ENCODE measurements at regions of chr1 and their contacts with region 1.

Region 1: GRCh38 chr1:6602669-6603237 is at the start of gene KLHL21:
- DNase-seq: peak; percentile 90
- ATAC-seq: peak; percentile 60
- H3K4me3 Mint-ChIP-seq: peak within 1 kb of the TSS; percentile 93
- H3K27ac Mint-ChIP-seq: peak within 1 kb of the TSS; percentile 98
- H3K4me1 Mint-ChIP-seq: peaks cover 28% of the 10 kb centered on the region
- H3K27me3 Mint-ChIP-seq: no peaks in the 10 kb centered on the region
- CTCF ChIP-seq: no peak
- total RNA-seq, gene KLHL21: 17.9 to 18.1 TPM

Region 2: DNA sequence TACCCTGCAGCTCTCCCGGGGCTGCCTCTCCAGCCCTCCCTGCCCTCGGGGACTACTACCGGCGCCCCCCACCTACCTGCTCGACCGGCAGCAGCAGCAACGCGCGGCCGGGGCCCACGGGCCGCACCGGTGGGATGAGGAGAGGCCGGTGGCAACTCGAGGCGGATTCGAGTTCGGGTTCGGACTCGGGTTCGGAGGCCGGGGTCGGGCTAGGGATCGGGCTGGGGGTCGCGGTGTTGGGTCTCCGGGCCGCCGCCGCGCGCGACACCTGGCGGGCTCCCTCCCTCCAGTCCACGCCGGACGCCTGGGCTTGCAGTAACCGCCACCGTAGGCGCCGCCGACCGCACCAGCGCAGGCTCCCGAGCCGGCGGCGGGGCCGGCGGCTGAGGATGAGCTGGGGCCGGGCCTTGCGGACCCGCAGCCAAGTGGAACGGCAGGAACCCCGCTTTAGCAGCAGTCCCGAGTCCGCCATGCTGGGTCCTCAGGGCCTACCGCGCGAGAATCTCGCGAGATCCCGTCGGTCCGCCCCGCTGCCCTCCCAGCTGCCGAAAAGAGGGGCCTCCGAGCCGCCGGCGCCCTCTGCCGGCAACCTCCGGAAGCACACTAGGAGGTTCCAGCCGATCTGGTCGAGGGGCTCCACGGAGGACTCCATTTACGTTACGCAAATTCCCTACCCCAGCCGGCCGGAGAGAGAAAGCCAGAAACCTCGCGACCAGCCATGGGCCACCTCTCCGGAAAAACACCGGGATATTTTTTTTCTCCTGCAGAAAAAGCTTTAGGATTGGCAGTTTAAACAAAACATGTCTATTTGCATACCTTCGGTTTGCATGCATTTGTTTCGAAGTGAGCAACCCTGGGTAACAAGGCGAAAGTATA is 48.5 kb before region 1 on chr1 and contains the start of gene NOL9:
- CTCF ChIA-PET with region 1: interaction called, 12 read pairs
- POLR2A ChIA-PET with region 1: interaction called, 9 read pairs
- intact Hi-C with region 1: no loop called
- DNase-seq: peak; percentile 97
- ATAC-seq: peak; percentile 100
- H3K4me3 Mint-ChIP-seq: peak within 1 kb of the TSS; percentile 82
- H3K27ac Mint-ChIP-seq: peak within 1 kb of the TSS; percentile 67
- H3K4me1 Mint-ChIP-seq: peaks cover 18% of the 10 kb centered on the region
- H3K27me3 Mint-ChIP-seq: no peaks in the 10 kb centered on the region
- CTCF ChIP-seq: peak; percentile 94
- total RNA-seq, gene NOL9: 39.7 to 40.4 TPM

Region 3: GRCh38 chr1:6579374-6580118 is 23.2 kb before region 1 on chr1 and contains the start of gene ZBTB48:
- CTCF ChIA-PET with region 1: interaction called, 3 read pairs
- POLR2A ChIA-PET with region 1: interaction called, 59 read pairs
- intact Hi-C with region 1: no loop called
- DNase-seq: peak; percentile 98
- ATAC-seq: peak; percentile 99
- H3K4me3 Mint-ChIP-seq: peak within 1 kb of the TSS; percentile 94
- H3K27ac Mint-ChIP-seq: peak within 1 kb of the TSS; percentile 95
- H3K4me1 Mint-ChIP-seq: peaks cover 26% of the 10 kb centered on the region
- H3K27me3 Mint-ChIP-seq: no peaks in the 10 kb centered on the region
- CTCF ChIP-seq: no peak
- total RNA-seq, gene ZBTB48: 22.4 to 32.1 TPM

Region 4: DNA sequence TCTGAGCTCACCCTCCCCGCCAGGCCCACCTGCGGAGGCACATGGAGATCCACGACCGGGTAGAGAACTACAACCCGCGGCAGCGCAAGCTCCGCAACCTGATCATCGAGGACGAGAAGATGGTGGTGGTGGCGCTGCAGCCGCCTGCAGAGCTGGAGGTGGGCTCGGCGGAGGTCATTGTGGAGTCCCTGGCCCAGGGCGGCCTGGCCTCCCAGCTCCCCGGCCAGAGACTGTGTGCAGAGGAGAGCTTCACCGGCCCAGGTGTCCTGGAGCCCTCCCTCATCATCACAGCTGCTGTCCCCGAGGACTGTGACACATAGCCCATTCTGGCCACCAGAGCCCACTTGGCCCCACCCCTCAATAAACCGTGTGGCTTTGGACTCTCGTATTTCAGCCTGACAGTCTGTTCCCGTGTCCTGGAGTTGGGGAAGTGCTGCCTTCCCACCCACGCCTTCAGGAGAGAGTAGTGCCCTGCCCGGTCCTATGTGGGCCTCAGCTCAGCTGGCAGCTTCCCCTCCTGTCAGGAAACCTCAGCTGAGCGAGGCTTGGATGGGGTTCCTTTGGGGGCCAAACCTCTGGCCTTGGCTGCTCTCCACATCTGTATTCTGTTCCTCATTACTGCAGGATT is 13.7 kb before region 1 on chr1:
- CTCF ChIA-PET with region 1: interaction called, 7 read pairs
- POLR2A ChIA-PET with region 1: interaction called, 13 read pairs
- intact Hi-C with region 1: no loop called
- DNase-seq: no peak
- ATAC-seq: no peak
- H3K4me3 Mint-ChIP-seq: no peak overlapping the region
- H3K27ac Mint-ChIP-seq: no peak overlapping the region
- H3K4me1 Mint-ChIP-seq: peaks cover 25% of the 10 kb centered on the region
- H3K27me3 Mint-ChIP-seq: no peaks in the 10 kb centered on the region
- CTCF ChIP-seq: no peak

Region 5: DNA sequence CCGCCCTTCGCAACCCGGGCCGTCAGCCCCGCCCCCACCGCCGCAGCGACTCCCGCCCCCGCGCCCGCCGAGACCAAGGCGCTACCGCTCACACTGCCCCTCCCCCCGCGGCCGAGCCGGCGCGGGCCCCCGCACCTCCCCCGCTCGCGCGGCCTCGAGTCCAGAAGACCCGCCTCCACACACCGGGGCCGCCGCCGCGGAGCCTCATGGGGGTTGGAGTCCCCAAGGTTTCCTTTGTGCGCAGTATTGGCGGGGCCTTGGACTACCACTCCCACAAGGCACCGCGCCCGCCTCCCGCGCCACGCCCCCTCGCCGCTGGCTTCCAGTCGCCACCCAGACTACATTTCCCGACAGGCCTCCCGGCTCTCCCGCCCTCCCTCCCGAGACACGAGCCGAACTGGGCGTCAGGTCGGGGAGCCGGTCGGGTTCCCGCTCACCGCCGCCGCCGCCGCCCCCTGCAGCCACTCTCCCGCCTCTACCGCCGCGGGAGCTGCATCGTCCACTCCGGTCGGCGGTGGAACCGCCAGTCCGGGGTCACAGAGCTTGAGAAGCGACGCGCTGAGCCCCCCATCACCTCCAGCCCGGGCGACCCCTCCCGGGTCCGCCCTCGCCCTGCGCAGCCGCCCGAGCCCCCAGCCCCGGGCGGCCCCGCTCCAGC is 10.7 kb after region 1 on chr1 and contains the start of gene PHF13:
- CTCF ChIA-PET with region 1: interaction called, 5 read pairs
- POLR2A ChIA-PET with region 1: interaction called, 46 read pairs
- intact Hi-C with region 1: loop called (anchors 1 kb)
- DNase-seq: peak; percentile 100
- ATAC-seq: peak; percentile 96
- H3K4me3 Mint-ChIP-seq: peak within 1 kb of the TSS; percentile 85
- H3K27ac Mint-ChIP-seq: peak within 1 kb of the TSS; percentile 83
- H3K4me1 Mint-ChIP-seq: peaks cover 14% of the 10 kb centered on the region
- H3K27me3 Mint-ChIP-seq: no peaks in the 10 kb centered on the region
- CTCF ChIP-seq: no peak
- total RNA-seq, gene PHF13: 12.5 to 14.8 TPM

Measured in activated CD8-positive, alpha-beta T cell treated with anti-CD3 and anti-CD28 coated beads for 36 hours (primary cell).